MCF 10A (cell line): ENCODE measurements at regions of chr6 and their contacts with region 1.

Region 1: GRCh38 chr6:113741651-113742050 is 115.5 kb upstream of the MARCKS start:
- DNase-seq: no peak
- H3K4me3 Mint-ChIP-seq: no peak overlapping the region
- H3K27ac Mint-ChIP-seq: no peak overlapping the region
- H3K4me1 Mint-ChIP-seq: no peaks in the 10 kb centered on the region
- H3K27me3 Mint-ChIP-seq: no peaks in the 10 kb centered on the region
- CTCF ChIP-seq: no peak

Region 2: GRCh38 chr6:113122060-113122459 is 619.6 kb before region 1 on chr6:
- CTCF ChIA-PET with region 1: no interaction called
- POLR2A ChIA-PET with region 1: no interaction called
- intact Hi-C with region 1: no loop called
- DNase-seq: peak; percentile 85
- H3K4me3 Mint-ChIP-seq: no peak overlapping the region
- H3K27ac Mint-ChIP-seq: no peak overlapping the region
- H3K4me1 Mint-ChIP-seq: peaks cover 18% of the 10 kb centered on the region
- H3K27me3 Mint-ChIP-seq: no peaks in the 10 kb centered on the region
- CTCF ChIP-seq: peak; percentile 12

Region 3: DNA sequence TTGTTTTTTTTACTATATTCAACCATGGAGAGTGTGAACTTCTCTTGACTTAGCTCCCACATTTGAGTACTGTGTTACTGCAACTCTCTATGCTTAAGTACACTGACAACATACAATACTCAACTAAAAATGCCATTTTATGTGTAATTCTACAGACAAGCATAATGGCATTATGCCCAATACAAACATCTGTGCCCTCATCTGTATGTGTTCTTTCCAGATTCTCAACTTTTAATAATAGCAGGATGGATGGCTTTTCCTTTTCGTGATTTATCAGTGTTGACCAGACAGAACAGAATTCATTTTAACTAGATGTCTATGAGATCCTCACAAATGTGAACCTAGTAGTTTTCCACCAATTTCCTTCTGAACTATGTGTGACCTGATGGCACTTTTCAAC is 31.3 kb after region 1 on chr6:
- CTCF ChIA-PET with region 1: no interaction called
- POLR2A ChIA-PET with region 1: no interaction called
- intact Hi-C with region 1: loop called (anchors 1 kb)
- DNase-seq: no peak
- H3K4me3 Mint-ChIP-seq: no peak overlapping the region
- H3K27ac Mint-ChIP-seq: no peak overlapping the region
- H3K4me1 Mint-ChIP-seq: no peaks in the 10 kb centered on the region
- H3K27me3 Mint-ChIP-seq: no peaks in the 10 kb centered on the region
- CTCF ChIP-seq: no peak